Transverse colon (tissue), 4 donors: ENCODE measurements at regions of chr6 and their contacts with region 1.

Region 1: DNA sequence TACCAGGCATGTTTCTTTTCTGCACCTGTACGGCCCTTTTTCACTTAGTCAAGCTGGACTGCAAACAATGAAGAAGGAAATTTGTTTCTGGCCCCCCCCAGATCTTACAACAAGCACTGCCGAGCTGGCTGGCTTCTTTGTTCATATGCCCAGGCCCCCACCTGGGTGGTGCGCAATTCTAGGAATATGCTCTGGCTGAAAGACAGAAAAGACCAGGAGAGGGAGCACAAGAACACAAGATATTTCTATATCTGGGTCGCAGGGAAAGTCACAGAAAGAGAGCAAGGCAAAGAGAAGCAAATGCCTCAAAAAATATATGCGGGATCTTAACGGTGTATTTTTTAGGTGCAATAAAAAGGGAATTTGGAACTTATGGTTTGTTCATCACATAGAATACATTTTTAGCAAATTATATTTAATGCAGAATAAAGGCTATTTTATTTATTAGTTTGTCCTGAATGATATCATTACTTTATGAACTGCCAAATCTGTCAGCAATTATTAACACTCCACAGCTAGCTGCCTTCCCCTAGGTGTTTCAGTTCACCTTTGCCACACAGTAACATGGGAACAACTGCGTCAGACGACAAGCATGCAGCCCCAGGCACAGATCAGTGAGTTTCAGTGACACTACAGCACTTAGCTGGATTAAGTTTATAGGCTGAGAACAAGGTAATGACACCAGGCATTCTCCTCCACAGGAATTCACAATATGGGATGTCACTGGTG is 76.5 kb downstream of the GJA10 start:
- DNase-seq: no peak
- H3K4me3 ChIP-seq: no peak overlapping the region
- H3K27ac ChIP-seq: no peak overlapping the region
- H3K4me1 ChIP-seq: no peaks in the 10 kb centered on the region
- H3K27me3 ChIP-seq: no peaks in the 10 kb centered on the region
- CTCF ChIP-seq: peak; percentile 52 to 71 (median 58)
- EP300 ChIP-seq: no peak
- POLR2A ChIP-seq: no peak

Region 2: DNA sequence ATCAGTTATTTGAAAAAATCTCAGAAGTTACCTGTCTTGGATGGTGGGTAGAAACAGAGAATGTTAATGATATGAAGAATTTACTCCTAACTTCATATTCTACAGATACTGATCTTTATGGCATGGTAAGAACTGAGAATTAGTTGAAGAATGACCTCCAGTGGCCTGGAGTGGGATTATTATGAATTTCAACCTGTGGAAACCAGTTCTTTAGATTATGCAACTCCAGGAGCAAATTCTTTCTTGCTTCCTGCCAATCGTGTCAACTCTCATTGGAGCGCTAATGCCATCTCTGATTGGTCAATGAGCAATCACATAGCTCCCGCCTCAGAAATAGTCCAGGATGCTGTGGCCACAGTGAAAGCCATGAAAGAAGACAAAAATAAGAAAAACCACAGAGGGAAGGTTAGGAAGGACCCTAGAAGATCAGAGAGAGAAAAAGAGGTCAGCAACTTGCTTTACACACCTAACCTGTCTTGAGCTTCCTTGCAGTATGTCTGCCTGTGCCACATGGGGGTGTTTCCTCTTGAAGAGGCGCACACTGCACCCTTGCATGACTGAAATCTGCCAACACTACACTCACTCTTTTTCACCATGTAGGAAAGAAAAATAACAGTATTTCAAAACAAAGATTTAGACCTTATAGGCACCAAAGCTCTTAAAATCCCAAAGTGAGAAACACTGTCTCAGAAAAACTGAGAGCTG is 372.6 kb before region 1 on chr6:
- in situ Hi-C with region 1: no loop called
- intact Hi-C with region 1: no loop called
- DNase-seq: no peak
- H3K4me3 ChIP-seq: no peak overlapping the region
- H3K27ac ChIP-seq: no peak overlapping the region
- H3K4me1 ChIP-seq: no peaks in the 10 kb centered on the region
- H3K27me3 ChIP-seq: no peaks in the 10 kb centered on the region
- CTCF ChIP-seq: no peak
- EP300 ChIP-seq: no peak
- POLR2A ChIP-seq: no peak

Region 3: GRCh38 chr6:89917802-89918366 is 52.9 kb before region 1 on chr6:
- in situ Hi-C with region 1: no loop called
- intact Hi-C with region 1: loop called (anchors 2 kb)
- DNase-seq: no peak
- H3K4me3 ChIP-seq: no peak overlapping the region
- H3K27ac ChIP-seq: no peak overlapping the region
- H3K4me1 ChIP-seq: no peaks in the 10 kb centered on the region
- H3K27me3 ChIP-seq: no peaks in the 10 kb centered on the region
- CTCF ChIP-seq: no peak
- EP300 ChIP-seq: no peak
- POLR2A ChIP-seq: no peak

Region 4: GRCh38 chr6:90212274-90212673 is 241.5 kb after region 1 on chr6:
- in situ Hi-C with region 1: no loop called
- intact Hi-C with region 1: no loop called
- DNase-seq: no peak
- H3K4me3 ChIP-seq: no peak overlapping the region
- H3K27ac ChIP-seq: no peak overlapping the region
- H3K4me1 ChIP-seq: peaks cover 0 to 12% (median 3%) of the 10 kb centered on the region in 4 donors
- H3K27me3 ChIP-seq: no peaks in the 10 kb centered on the region
- CTCF ChIP-seq: no peak
- EP300 ChIP-seq: no peak
- POLR2A ChIP-seq: no peak

Region 5: GRCh38 chr6:90296346-90297114 is 325.8 kb after region 1 on chr6 and contains the start of gene BACH2:
- in situ Hi-C with region 1: loop called in 2 of 4 experiments (anchors 25 kb)
- intact Hi-C with region 1: no loop called
- DNase-seq: peak; percentile 93
- H3K4me3 ChIP-seq: peak within 1 kb of the TSS; percentile 59 to 89 (median 69)
- H3K27ac ChIP-seq: peak within 1 kb of the TSS; percentile 79 to 83 (median 82)
- H3K4me1 ChIP-seq: peaks cover 0 to 19% (median 12%) of the 10 kb centered on the region in 4 donors
- H3K27me3 ChIP-seq: peaks cover 67% of the 10 kb centered on the region
- CTCF ChIP-seq: peak in 2 of 5 experiments; percentile 6 to 16
- EP300 ChIP-seq: no peak
- POLR2A ChIP-seq: peak; percentile 25
- total RNA-seq, gene BACH2: 0.20 to 7.5 (median 2.4) TPM

Region 6: GRCh38 chr6:90393232-90393884 is 422.6 kb after region 1 on chr6:
- in situ Hi-C with region 1: loop called in 2 of 4 experiments (anchors 25 kb)
- intact Hi-C with region 1: no loop called
- DNase-seq: peak; percentile 57
- H3K4me3 ChIP-seq: no peak overlapping the region
- H3K27ac ChIP-seq: no peak overlapping the region
- H3K4me1 ChIP-seq: no peaks in the 10 kb centered on the region
- H3K27me3 ChIP-seq: no peaks in the 10 kb centered on the region
- CTCF ChIP-seq: peak; percentile 65 to 75 (median 66)
- EP300 ChIP-seq: no peak
- POLR2A ChIP-seq: no peak